CD14-positive monocyte (primary cell): ENCODE measurements at regions of chr12 and their contacts with region 1.

Region 1: DNA sequence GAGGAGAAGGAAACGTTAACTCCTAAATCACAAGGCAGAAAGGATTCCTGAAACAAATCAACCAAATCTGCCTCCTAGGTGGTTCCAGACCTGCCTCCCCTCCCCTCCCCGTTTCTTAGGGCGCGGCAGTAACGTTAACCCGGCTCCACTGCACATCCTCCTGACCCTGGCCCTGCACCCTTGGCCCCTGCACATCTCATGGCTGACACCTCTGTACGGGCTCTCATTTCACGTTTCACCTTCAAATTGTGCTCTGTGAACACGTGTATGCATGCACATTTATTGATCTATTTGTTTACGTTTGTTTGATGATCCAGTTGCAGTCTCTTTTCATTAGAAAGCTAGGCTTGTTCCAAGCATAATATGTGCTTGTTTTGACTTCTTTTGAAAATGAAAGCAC is 358.1 kb downstream of the ADGRD1 start:
- DNase-seq: no peak
- H3K4me3 ChIP-seq: no peak overlapping the region
- H3K4me3 Mint-ChIP-seq: peak overlapping the region in 1 of 2 donors; percentile 0
- H3K27ac ChIP-seq: no peak overlapping the region
- H3K27ac Mint-ChIP-seq: no peak overlapping the region
- H3K4me1 ChIP-seq: no peaks in the 10 kb centered on the region
- H3K4me1 Mint-ChIP-seq: peaks cover 4% of the 10 kb centered on the region
- H3K27me3 ChIP-seq: peaks cover 0 to 3% of the 10 kb centered on the region in 2 donors
- H3K27me3 Mint-ChIP-seq: peaks cover 0 to 25% (median 6%) of the 10 kb centered on the region in 3 donors
- CTCF ChIP-seq: no peak

Region 2: DNA sequence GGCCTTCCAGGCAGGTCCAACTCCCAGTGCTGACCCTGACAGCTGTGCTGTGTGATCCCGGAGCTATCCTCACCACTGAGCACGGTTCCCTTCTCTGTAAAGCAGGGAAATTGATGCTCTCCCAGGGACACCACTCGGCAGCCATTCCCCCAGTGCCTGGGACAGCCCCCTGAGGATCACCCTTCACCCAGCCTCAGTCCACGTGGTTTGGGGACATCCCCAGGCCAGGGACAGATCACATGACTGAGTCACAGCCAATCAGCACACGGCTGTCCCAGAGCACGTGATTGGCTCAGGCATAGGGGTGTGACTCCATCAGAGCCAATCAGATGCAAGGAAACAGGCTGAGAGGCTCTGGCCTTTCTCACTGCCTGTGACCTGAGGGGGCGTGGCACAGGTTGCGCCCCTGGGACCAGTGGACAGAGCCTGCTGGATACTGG is 330.4 kb after region 1 on chr12:
- intact Hi-C with region 1: loop called in 1 of 2 experiments (anchors 5 kb)
- DNase-seq: peak in 1 of 3 donors; percentile 22
- H3K4me3 ChIP-seq: no peak overlapping the region
- H3K4me3 Mint-ChIP-seq: no peak overlapping the region
- H3K27ac ChIP-seq: no peak overlapping the region
- H3K27ac Mint-ChIP-seq: no peak overlapping the region
- H3K4me1 ChIP-seq: no peaks in the 10 kb centered on the region
- H3K4me1 Mint-ChIP-seq: no peaks in the 10 kb centered on the region
- H3K27me3 ChIP-seq: peaks cover 0 to 4% of the 10 kb centered on the region in 2 donors
- H3K27me3 Mint-ChIP-seq: peaks cover 13 to 25% (median 20%) of the 10 kb centered on the region in 3 donors
- CTCF ChIP-seq: no peak